ENCODE measurements at regions of chr14 and their contacts with region 1.

Region 1: GRCh38 chr14:71138448-71139293 is 231.4 kb downstream of the PCNX1 start:
- DNase-seq: peak; percentile 46
- H3K4me3 ChIP-seq: no peak overlapping the region
- H3K27ac ChIP-seq: no peak overlapping the region
- H3K4me1 ChIP-seq: peaks cover 15% of the 10 kb centered on the region
- H3K27me3 ChIP-seq: no peaks in the 10 kb centered on the region
- CTCF ChIP-seq: peak; percentile 85 to 90
- POLR2A ChIP-seq: no peak

Region 2: GRCh38 chr14:70809543-70810244 is 329.0 kb before region 1 on chr14:
- CTCF ChIA-PET with region 1: no interaction called
- POLR2A ChIA-PET with region 1: no interaction called
- dilution Hi-C with region 1: no loop called
- intact Hi-C with region 1: no loop called
- DNase-seq: peak; percentile 34
- H3K4me3 ChIP-seq: peak overlapping the region in 2 of 3 experiments; percentile 29 to 47
- H3K27ac ChIP-seq: no peak overlapping the region
- H3K4me1 ChIP-seq: peaks cover 3% of the 10 kb centered on the region
- H3K27me3 ChIP-seq: peaks cover 41 to 52% of the 10 kb centered on the region in 2 experiments
- CTCF ChIP-seq: no peak
- POLR2A ChIP-seq: no peak

Region 3: GRCh38 chr14:70999117-70999516 is 139.6 kb before region 1 on chr14:
- CTCF ChIA-PET with region 1: no interaction called
- POLR2A ChIA-PET with region 1: no interaction called
- dilution Hi-C with region 1: no loop called
- intact Hi-C with region 1: no loop called
- DNase-seq: no peak
- H3K4me3 ChIP-seq: no peak overlapping the region
- H3K27ac ChIP-seq: no peak overlapping the region
- H3K4me1 ChIP-seq: no peaks in the 10 kb centered on the region
- H3K27me3 ChIP-seq: no peaks in the 10 kb centered on the region
- CTCF ChIP-seq: no peak
- POLR2A ChIP-seq: no peak

Region 4: GRCh38 chr14:71166180-71166790 is 27.6 kb after region 1 on chr14:
- CTCF ChIA-PET with region 1: interaction called, 12 read pairs
- POLR2A ChIA-PET with region 1: no interaction called
- dilution Hi-C with region 1: no loop called
- intact Hi-C with region 1: loop called (anchors 1 kb)
- DNase-seq: peak; percentile 64
- H3K4me3 ChIP-seq: no peak overlapping the region
- H3K27ac ChIP-seq: no peak overlapping the region
- H3K4me1 ChIP-seq: no peaks in the 10 kb centered on the region
- H3K27me3 ChIP-seq: peaks cover 0 to 1% of the 10 kb centered on the region in 2 experiments
- CTCF ChIP-seq: peak; percentile 13 to 66
- POLR2A ChIP-seq: no peak

Region 5: DNA sequence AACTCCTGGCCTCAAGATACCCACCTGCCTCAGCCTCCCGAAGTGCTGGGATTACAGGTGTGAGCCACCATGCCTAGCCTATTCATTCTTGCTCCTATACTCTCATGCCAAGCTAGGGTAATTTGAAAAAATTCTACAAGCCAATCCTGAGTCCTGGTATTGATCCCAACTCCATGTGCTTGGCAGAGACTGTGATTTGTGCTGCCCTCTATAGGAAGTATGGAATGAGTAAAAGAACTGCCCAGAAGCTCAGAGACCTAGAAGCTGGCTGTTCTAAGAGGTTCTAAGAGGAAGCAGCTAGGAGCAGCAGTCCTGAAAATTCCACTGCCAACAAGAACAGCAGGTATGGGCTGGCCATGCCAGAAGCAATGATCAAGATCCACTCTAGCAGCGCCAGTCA is 171.1 kb after region 1 on chr14:
- CTCF ChIA-PET with region 1: interaction called, 18 read pairs
- POLR2A ChIA-PET with region 1: no interaction called
- dilution Hi-C with region 1: no loop called
- intact Hi-C with region 1: no loop called
- DNase-seq: no peak
- H3K4me3 ChIP-seq: no peak overlapping the region
- H3K27ac ChIP-seq: no peak overlapping the region
- H3K4me1 ChIP-seq: no peaks in the 10 kb centered on the region
- H3K27me3 ChIP-seq: peaks cover 6 to 14% of the 10 kb centered on the region in 2 experiments
- CTCF ChIP-seq: no peak
- POLR2A ChIP-seq: no peak

Region 6: GRCh38 chr14:71403656-71404055 is 265.0 kb after region 1 on chr14:
- CTCF ChIA-PET with region 1: interaction called, 16 read pairs
- POLR2A ChIA-PET with region 1: interaction called, 11 read pairs
- dilution Hi-C with region 1: no loop called
- intact Hi-C with region 1: loop called (anchors 1 kb)
- DNase-seq: no peak
- H3K4me3 ChIP-seq: no peak overlapping the region
- H3K27ac ChIP-seq: no peak overlapping the region
- H3K4me1 ChIP-seq: peaks cover 3% of the 10 kb centered on the region
- H3K27me3 ChIP-seq: no peaks in the 10 kb centered on the region
- CTCF ChIP-seq: no peak
- POLR2A ChIP-seq: no peak

Region 7: DNA sequence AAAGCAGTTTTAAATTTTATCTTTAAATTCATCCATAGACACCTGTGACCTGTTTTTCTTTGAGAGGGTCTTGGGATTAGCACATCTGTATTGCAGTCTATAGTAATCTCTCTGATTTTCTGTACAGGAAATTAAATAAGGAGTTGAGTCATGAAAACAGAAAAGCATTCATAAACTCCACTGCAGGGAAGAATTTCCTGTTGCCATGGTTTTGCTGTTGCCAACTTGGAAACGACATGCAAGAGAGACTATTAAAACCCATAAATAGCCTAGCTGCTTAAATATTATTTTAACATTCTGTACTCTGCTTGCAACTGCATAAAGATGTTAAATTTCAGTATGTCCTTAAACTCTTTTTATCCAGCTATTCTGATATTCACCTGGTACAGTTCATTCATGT is 512.6 kb after region 1 on chr14:
- CTCF ChIA-PET with region 1: no interaction called
- POLR2A ChIA-PET with region 1: no interaction called
- dilution Hi-C with region 1: no loop called
- intact Hi-C with region 1: loop called (anchors 2 kb)
- DNase-seq: peak; percentile 96
- H3K4me3 ChIP-seq: peak overlapping the region in 1 of 3 experiments; percentile 29
- H3K27ac ChIP-seq: peak overlapping the region; percentile 85
- H3K4me1 ChIP-seq: peaks cover 23% of the 10 kb centered on the region
- H3K27me3 ChIP-seq: no peaks in the 10 kb centered on the region
- CTCF ChIP-seq: no peak
- POLR2A ChIP-seq: no peak

Region 8: GRCh38 chr14:71720978-71721624 is 582.4 kb after region 1 on chr14:
- CTCF ChIA-PET with region 1: interaction called, 3 read pairs
- POLR2A ChIA-PET with region 1: no interaction called
- dilution Hi-C with region 1: no loop called
- intact Hi-C with region 1: loop called (anchors 1 kb)
- DNase-seq: peak; percentile 70
- H3K4me3 ChIP-seq: no peak overlapping the region
- H3K27ac ChIP-seq: no peak overlapping the region
- H3K4me1 ChIP-seq: no peaks in the 10 kb centered on the region
- H3K27me3 ChIP-seq: no peaks in the 10 kb centered on the region
- CTCF ChIP-seq: peak; percentile 70 to 72
- POLR2A ChIP-seq: no peak